GM10248 (cell line): ENCODE measurements at regions of chr5 and their contacts with region 1.

Region 1: GRCh38 chr5:177311723-177312648 is at the start of gene MXD3:
- DNase-seq: peak; percentile 98
- CTCF ChIP-seq: no peak

Region 2: DNA sequence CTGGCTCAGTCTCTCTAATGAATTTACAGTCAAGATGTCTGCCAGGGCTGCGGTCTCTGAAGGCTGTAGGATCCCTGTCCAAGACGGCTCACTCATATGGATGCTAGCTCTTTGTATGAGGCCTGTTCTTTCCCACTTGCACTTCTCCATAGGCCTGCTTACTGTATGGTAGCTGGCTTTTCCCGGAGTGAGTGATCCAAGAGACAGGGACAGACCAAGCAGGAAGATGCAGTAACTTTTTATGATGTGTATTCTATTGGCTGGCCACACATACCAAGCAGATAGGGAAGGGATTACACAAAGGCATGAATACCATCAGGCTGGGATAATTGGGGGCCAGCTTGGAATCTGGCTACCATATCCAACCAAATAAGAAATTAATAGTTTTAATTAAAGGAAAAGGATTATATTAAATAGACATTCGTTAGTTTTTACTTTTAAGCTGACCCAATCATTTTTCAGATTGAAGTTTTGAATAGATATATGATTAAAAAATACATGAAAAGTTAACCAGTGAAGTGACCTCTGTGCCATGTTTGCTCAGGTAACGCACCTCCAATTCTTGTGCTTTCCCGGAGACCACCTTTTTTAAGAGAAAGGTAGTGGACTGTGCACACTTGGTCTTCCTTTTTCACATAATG is 157.9 kb before region 1 on chr5:
- CTCF ChIA-PET with region 1: no interaction called
- POLR2A ChIA-PET with region 1: no interaction called
- DNase-seq: no peak
- CTCF ChIP-seq: no peak

Region 3: DNA sequence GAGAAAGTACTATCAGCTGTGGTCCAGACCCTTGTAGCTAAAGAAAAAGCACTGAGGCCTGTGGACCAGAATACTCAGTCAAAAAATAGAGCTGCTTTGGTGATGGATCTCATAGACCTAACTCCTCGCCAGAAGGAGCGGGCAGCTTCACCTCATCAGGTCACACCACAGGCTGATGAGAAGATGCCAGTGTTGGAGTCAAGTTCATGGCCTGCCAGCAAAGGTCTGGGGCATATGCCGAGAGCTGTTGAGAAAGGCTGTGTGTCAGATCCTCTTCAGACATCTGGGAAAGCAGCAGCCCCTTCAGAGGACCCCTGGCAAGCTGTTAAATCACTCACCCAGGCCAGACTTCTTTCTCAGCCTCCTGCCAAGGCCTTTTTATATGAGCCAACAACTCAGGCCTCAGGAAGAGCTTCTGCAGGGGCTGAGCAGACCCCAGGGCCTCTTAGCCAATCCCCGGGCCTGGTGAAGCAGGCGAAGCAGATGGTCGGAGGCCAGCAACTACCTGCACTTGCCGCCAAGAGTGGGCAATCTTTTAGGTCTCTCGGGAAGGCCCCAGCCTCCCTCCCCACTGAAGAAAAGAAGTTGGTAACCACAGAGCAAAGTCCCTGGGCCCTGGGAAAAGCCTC is 17.2 kb before region 1 on chr5:
- CTCF ChIA-PET with region 1: interaction called, 56 read pairs
- POLR2A ChIA-PET with region 1: no interaction called
- DNase-seq: no peak
- CTCF ChIP-seq: no peak

Region 4: DNA sequence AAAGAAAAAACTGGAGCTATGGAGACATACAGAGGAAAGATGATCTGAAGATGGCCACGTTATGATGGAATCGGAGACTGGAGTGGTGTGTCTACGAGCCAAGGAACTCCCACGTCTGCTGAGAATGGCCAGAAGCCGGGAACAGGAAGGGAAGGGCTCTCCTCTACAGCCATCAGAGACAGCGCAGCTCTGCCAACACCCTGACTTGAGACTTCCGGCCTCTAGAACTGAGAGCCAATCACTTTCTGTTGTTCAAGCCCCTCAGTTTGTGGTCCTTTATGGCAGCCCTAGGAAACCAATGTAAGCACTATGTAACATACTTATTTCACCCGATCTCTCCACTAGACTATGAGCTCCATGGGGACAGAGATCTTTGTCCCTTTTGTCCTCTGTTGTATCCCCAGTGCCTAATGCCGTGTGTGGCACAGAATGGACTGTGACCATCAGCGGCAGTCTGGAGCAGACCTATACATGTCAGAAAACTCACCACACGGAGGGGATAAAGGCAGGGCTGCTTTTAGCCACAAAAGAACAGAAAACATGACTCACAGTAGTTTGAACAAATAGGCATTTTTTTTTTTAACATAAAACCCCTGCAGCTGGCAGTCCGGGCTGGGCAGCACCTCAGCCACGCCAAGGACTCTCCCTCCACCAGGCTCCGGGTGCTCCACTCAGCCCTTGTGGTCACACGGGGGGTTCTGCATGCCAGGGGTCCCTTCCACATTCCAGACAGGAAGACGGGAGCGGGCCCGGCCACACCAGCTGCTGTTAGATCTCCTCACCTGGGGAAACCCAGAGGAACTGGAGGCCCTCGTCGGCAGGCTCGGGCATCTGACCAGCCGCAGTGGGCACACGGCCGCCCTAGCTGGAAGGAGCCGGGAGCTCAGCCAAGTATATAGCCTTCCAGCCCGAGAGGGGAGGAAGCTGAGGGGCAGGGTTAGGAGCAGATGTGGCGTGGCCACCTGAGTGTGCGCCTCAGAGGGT is 15.8 kb after region 1 on chr5:
- CTCF ChIA-PET with region 1: interaction called, 17 read pairs
- POLR2A ChIA-PET with region 1: no interaction called
- DNase-seq: no peak
- CTCF ChIP-seq: no peak

Region 5: DNA sequence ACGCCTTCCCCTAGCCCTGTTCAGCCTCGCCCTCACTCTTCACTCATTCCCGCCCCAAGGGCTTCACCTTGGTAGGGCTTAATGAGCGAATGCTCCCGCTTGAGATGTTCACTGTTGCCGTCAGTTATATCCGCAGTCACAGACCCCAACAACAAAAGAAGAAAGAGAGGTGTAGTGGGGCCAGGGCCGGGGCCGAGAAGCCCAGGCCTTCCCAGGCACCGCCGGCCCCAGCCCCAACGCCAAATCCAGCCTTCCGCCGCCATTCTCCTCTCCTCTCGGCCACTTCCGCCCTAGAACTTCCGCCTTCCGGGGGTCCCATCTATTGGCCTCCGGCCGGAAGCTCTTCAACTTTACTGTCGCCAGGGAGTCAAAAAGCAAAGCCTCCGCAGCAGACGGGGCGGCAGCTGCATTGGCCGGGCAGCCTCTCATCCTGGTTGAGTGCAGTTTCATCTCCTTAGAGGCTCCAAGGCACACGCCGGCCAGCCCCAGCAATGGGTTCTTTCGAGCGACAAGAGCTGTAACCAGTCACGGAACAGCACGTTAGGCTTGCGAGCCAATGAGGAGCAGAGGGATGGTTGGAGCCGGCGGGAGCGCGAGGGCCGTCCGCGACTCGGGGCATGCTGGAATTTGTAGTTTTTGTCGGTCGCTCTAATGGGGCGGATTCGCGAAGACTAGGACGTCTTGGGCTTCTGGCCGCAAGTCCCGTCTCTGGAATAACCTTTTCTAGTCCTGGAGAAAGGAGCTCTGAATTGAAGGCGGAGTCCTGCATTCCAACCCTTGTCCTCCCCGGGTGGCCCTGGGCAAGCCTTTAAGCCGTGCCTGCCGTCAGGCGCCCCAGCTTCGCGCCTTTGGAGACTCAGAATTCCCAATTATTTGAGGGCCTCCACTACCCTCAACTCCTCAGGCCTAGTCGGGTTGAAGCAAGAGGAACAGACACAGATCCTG is 39.7 kb after region 1 on chr5 and contains the start of gene LMAN2:
- CTCF ChIA-PET with region 1: interaction called, 21 read pairs
- POLR2A ChIA-PET with region 1: no interaction called
- DNase-seq: peak; percentile 94
- CTCF ChIP-seq: no peak

Region 6: GRCh38 chr5:177370488-177371119 is 58.6 kb after region 1 on chr5:
- CTCF ChIA-PET with region 1: interaction called, 15 read pairs
- POLR2A ChIA-PET with region 1: no interaction called
- DNase-seq: peak; percentile 76
- CTCF ChIP-seq: peak; percentile 44

Region 7: DNA sequence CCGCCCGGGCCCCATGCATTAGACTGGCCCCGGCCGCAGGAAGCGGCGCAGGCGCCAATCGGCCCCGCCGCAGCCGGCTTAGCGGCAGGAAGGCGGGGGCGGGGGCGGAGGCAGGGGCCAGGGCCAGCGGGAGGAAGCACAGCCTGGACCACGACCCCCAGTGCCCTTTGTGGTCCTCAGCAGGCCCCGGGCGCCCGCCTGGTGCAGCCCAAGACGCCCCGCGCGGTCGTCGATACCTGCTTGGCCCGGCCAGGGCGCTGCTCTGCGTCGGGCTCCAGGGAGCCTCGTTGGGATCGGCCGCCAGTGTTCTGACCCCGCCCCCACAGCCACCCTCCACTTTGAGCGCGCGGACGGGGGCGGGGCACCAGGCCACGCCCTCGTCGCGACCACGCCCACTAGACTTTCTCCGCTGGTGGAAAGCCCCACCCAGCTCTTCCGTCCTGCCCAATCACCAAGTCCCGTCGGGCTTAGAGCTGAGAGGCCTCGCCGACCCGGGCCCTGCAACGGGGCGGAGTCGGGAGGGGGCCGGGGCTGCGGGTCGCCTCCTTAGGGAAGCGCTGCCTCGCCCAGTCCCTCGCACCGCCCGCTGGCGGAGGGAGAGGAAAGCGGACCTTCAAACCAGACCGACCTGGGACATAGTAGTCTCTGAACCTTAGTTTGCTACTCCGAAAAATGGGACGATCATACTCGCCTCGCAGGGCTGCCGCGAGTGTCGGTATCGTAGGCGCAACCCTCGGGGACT is 185.5 kb after region 1 on chr5 and contains the start of gene PDLIM7:
- CTCF ChIA-PET with region 1: interaction called, 11 read pairs
- POLR2A ChIA-PET with region 1: no interaction called
- DNase-seq: peak; percentile 97
- CTCF ChIP-seq: no peak